B cell (primary cell): ENCODE measurements at regions of chr1 and their contacts with region 1.

Region 1: DNA sequence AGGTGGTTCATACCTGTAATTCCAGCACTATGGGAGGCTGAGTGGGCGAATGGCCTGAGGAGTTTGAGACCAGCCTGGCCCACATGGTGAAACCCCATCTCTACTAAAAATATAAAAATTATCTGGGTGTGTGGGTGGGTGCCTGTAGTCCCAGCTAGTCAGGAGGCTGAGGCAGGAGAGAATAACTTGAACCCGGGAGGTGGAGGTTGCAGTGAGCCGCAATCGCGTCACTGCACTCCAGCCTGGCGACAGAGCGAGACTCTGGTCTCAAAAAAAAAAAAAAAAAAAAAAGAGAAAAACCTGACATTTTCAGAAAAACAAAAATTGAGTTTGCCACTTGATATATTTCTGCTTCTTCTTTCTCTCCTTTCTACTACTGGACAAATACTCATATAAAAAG is 24.3 kb downstream of the CA6 start:
- DNase-seq: no peak
- ATAC-seq: no peak
- H3K4me3 ChIP-seq: no peak overlapping the region
- H3K4me3 Mint-ChIP-seq: no peak overlapping the region
- H3K27ac ChIP-seq: no peak overlapping the region
- H3K27ac Mint-ChIP-seq: no peak overlapping the region
- H3K4me1 ChIP-seq: peaks cover 7 to 11% of the 10 kb centered on the region in 2 donors
- H3K4me1 Mint-ChIP-seq: peaks cover 12% of the 10 kb centered on the region
- H3K27me3 ChIP-seq: no peaks in the 10 kb centered on the region
- H3K27me3 Mint-ChIP-seq: peaks cover 9% of the 10 kb centered on the region
- CTCF ChIP-seq: no peak

Region 2: DNA sequence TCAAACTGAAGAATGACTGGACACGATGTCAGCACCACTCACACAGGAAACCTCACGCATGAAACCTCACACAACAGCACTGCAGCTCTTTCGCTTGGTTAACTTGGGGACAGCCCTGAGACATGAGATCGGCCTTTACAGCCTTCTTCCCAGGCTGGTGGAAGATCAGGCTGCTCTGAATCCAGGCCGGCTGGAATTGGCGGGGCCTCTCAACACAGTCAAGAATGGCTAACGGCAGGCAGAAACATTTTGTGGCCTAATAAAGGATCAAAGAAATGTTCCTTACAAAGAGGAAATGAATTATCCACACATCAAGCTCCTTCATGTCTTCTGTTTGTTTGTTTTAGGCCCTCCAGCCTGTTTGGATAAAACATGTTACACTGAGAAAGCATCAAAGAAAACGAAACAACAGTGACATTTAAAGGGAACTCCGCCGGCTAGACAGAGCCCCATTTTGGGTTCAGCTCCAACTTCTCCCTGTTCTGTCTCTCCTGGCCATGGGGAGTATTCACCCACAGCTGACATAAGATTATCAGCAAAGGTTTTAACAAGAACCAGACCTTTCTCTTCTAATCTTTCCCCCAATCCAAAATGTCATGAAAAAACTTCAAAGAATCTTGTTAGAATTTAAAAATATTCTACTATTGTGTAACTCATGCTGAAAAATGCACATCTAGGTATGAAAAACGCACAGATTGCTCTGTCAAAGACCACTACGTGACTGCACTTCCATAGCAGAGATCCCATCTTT is 520.9 kb before region 1 on chr1:
- CTCF ChIA-PET with region 1: no interaction called
- POLR2A ChIA-PET with region 1: interaction called, 11 read pairs
- intact Hi-C with region 1: no loop called
- DNase-seq: no peak
- ATAC-seq: no peak
- H3K4me3 ChIP-seq: no peak overlapping the region
- H3K4me3 Mint-ChIP-seq: no peak overlapping the region
- H3K27ac ChIP-seq: peak overlapping the region in 1 of 2 donors; percentile 30
- H3K27ac Mint-ChIP-seq: no peak overlapping the region
- H3K4me1 ChIP-seq: peaks cover 0 to 3% of the 10 kb centered on the region in 2 donors
- H3K4me1 Mint-ChIP-seq: peaks cover 4% of the 10 kb centered on the region
- H3K27me3 ChIP-seq: no peaks in the 10 kb centered on the region
- H3K27me3 Mint-ChIP-seq: no peaks in the 10 kb centered on the region
- CTCF ChIP-seq: no peak